ENCODE measurements at regions of chr12 and their contacts with region 1.

Region 1: GRCh38 chr12:81450920-81451739 is 308.0 kb downstream of the PPFIA2 start:
- DNase-seq: no peak
- ATAC-seq: no peak
- H3K4me3 ChIP-seq: no peak overlapping the region
- H3K27ac ChIP-seq: no peak overlapping the region
- H3K4me1 ChIP-seq: no peaks in the 10 kb centered on the region
- H3K27me3 ChIP-seq: no peaks in the 10 kb centered on the region
- CTCF ChIP-seq: peak in 1 of 5 experiments; percentile 23
- POLR2A ChIP-seq: no peak

Region 2: DNA sequence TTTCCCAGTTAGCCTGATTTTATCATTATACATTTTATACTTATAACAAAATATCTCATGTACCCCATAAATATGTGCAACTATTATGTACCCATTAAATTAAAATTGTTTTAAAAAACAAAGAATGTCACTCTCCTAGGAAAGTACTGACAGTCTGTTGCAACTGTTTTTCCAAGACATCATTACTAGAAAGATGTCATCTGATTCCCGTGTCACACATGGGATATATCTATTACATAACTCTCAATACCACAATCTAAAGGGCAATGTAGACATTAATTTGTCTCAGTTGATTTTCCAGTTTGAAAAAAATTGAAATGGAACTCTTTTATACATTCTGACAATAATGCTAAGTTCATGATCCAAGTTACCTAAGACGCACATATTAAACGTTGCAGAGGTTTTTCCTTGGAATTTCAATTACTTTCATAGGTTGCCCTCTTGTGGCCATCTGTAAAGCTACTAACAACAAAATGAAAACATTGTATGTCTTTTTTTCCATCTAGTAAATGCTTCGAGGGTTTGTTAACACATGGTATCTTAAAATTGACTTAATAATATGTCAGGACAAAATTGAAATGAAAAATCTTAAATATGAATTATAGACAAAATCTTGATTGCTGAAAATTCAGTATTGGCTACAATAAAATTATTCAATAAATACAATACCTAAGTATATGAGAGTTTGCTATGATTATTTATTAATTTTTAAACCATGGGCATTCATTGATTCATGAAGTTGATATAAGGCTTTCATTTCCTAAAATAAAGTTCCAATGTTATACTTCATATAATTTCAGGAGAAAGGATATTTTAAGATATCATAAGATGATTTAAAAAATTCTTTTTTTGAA is 176.4 kb after region 1 on chr12:
- in situ Hi-C with region 1: no loop called
- intact Hi-C with region 1: loop called (anchors 5 kb)
- DNase-seq: no peak
- ATAC-seq: no peak
- H3K4me3 ChIP-seq: no peak overlapping the region
- H3K27ac ChIP-seq: no peak overlapping the region
- H3K4me1 ChIP-seq: no peaks in the 10 kb centered on the region
- H3K27me3 ChIP-seq: no peaks in the 10 kb centered on the region
- CTCF ChIP-seq: peak in 1 of 5 experiments; percentile 30
- POLR2A ChIP-seq: no peak